Colonic mucosa (tissue), 4 donors: ENCODE measurements at regions of chr14 and their contacts with region 1.

Region 1: DNA sequence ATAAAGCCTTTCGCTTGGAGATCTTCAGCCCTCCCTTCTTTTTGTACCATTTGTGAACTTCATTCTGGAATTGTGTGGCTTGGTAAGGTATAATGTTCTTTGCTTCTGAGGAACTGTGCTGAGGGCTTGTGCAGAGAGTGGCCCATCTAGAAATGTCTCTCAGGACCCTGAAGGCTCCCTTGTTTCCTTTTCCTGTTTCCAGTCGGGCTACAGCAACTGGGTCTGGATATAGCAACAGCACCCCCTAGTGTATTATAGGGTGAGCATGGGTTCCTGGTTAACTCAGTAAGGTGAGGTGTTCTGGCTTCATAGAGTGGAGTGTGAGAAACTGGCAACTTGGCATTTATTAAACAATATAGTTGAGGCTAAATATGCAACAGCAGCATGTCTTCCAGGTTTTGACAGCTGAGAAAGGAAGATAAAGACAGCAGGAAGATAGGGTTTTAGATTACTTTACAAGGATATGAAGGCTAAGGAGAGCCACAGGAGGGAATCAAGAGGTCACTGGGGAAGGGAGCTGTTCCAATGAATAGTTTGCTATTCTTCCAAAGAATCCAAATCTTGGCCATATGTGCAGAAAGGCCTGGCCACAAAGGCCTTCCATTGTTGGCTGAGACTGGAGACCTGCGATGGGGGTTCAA is 49.1 kb upstream of the RNU6-8 start:
- DNase-seq: peak; percentile 69
- H3K4me3 ChIP-seq: no peak overlapping the region
- H3K27ac ChIP-seq: no peak overlapping the region
- H3K4me1 ChIP-seq: no peaks in the 10 kb centered on the region
- H3K27me3 ChIP-seq: no peaks in the 10 kb centered on the region
- CTCF ChIP-seq: peak; percentile 76

Region 2: GRCh38 chr14:31510222-31510621 is 741.9 kb before region 1 on chr14:
- intact Hi-C with region 1: loop called (anchors 5 kb)
- DNase-seq: no peak
- H3K4me3 ChIP-seq: no peak overlapping the region
- H3K27ac ChIP-seq: no peak overlapping the region
- H3K4me1 ChIP-seq: no peaks in the 10 kb centered on the region
- H3K27me3 ChIP-seq: no peaks in the 10 kb centered on the region
- CTCF ChIP-seq: peak; percentile 66

Region 3: DNA sequence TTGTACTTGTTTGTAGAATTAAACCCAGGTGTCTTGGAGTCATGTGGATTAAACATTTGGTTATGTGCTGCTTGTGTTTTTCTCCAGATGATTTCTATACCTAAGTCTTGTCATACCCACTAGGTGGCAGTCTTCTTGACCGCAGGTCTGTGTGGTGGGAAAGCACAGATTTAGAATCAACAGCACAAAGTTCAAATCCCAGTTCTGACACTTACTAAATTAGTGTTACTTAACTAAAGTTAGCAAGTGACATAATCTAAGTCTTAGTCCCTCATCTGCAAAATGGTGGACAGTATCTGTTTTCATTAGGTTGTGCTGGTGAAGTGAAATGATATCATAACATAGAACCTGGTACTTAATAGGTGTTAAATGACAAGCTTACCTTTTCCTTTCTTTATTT is 326.0 kb before region 1 on chr14:
- intact Hi-C with region 1: loop called (anchors 5 kb)
- DNase-seq: no peak
- H3K4me3 ChIP-seq: no peak overlapping the region
- H3K27ac ChIP-seq: no peak overlapping the region
- H3K4me1 ChIP-seq: no peaks in the 10 kb centered on the region
- H3K27me3 ChIP-seq: no peaks in the 10 kb centered on the region
- CTCF ChIP-seq: peak; percentile 58

Region 4: DNA sequence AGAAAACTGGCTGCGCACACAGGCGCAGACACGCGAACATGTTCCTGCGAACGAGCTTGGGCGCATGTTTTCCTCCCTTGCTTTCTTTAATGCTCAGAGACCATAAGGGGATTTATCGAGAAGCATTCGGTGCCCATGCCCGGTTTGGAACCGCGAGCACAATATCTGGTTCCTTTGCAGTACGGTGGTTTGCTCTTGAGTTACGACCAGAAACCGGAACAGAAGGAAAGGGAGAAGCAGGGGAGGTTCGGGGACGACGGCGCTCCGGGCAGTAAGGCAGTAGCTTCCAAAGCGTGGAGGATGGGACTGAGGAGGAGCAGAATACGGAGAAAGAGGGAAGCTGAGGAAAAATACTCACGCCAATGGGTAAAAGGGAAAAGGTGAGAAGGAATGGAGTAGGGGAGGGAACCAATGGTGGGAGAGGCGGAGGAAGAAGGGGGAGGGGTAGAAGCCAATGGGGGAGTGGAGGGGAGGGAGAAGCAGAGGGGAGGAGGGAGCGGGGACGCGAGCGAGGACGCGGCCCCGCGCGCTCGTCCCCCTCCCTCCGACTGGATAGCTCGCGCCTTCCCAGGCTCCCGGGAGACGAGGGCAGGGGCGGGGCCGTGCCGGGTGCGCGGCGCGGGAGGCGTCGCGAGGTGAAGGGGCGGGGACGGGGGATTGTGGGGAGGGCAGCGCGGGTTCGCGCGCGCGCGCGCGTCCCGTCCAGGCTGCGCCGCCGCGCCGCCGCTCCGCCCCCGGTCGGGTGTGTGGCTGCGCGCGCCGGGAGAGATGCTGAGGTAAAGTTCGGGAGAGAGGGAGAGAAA is 175.7 kb before region 1 on chr14:
- intact Hi-C with region 1: loop called (anchors 2 kb)
- DNase-seq: peak; percentile 97
- H3K4me3 ChIP-seq: peak overlapping the region; percentile 85
- H3K27ac ChIP-seq: peak overlapping the region; percentile 99
- H3K4me1 ChIP-seq: no peaks in the 10 kb centered on the region
- H3K27me3 ChIP-seq: no peaks in the 10 kb centered on the region
- CTCF ChIP-seq: no peak

Region 5: DNA sequence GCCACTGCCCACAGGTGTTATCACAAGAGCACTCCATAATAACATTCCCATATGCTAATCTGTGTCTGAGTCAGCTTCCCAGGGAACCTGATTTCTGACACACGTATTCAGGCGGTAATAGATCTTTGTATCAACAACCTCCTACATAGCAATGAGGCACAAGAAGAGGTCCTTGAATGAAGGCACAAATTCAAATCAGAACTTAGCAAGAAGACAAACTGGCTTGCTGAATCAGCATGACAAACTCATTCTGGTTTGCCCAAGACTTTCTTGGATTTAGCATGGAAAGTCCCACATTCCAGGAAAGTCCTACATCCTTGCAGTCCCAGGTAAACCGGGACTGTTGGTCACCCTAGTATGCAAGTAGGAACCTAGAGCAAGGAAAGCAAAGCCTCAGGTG is 84.2 kb before region 1 on chr14:
- intact Hi-C with region 1: no loop called
- DNase-seq: no peak
- H3K4me3 ChIP-seq: no peak overlapping the region
- H3K27ac ChIP-seq: no peak overlapping the region
- H3K4me1 ChIP-seq: no peaks in the 10 kb centered on the region
- H3K27me3 ChIP-seq: no peaks in the 10 kb centered on the region
- CTCF ChIP-seq: no peak

Region 6: GRCh38 chr14:32469388-32470160 is 217.4 kb after region 1 on chr14:
- intact Hi-C with region 1: loop called (anchors 5 kb)
- DNase-seq: no peak
- H3K4me3 ChIP-seq: no peak overlapping the region
- H3K27ac ChIP-seq: no peak overlapping the region
- H3K4me1 ChIP-seq: no peaks in the 10 kb centered on the region
- H3K27me3 ChIP-seq: no peaks in the 10 kb centered on the region
- CTCF ChIP-seq: peak; percentile 34

Region 7: GRCh38 chr14:32559595-32559994 is 307.4 kb after region 1 on chr14:
- intact Hi-C with region 1: loop called (anchors 5 kb)
- DNase-seq: no peak
- H3K4me3 ChIP-seq: no peak overlapping the region
- H3K27ac ChIP-seq: no peak overlapping the region
- H3K4me1 ChIP-seq: no peaks in the 10 kb centered on the region
- H3K27me3 ChIP-seq: no peaks in the 10 kb centered on the region
- CTCF ChIP-seq: no peak